B cell (primary cell): ENCODE measurements at regions of chr22 and their contacts with region 1.

Region 1: GRCh38 chr22:38051900-38052862 is 5.0 kb upstream of the PICK1 start:
- DNase-seq: peak; percentile 90
- ATAC-seq: peak; percentile 87
- H3K4me3 ChIP-seq: no peak overlapping the region
- H3K4me3 Mint-ChIP-seq: peak overlapping the region; percentile 26
- H3K27ac ChIP-seq: no peak overlapping the region
- H3K27ac Mint-ChIP-seq: no peak overlapping the region
- H3K4me1 ChIP-seq: peaks cover 6 to 20% of the 10 kb centered on the region in 2 donors
- H3K4me1 Mint-ChIP-seq: peaks cover 13% of the 10 kb centered on the region
- H3K27me3 ChIP-seq: peaks cover 0 to 14% (median 2%) of the 10 kb centered on the region in 4 experiments
- H3K27me3 Mint-ChIP-seq: peaks cover 4% of the 10 kb centered on the region
- CTCF ChIP-seq: peak; percentile 88

Region 2: DNA sequence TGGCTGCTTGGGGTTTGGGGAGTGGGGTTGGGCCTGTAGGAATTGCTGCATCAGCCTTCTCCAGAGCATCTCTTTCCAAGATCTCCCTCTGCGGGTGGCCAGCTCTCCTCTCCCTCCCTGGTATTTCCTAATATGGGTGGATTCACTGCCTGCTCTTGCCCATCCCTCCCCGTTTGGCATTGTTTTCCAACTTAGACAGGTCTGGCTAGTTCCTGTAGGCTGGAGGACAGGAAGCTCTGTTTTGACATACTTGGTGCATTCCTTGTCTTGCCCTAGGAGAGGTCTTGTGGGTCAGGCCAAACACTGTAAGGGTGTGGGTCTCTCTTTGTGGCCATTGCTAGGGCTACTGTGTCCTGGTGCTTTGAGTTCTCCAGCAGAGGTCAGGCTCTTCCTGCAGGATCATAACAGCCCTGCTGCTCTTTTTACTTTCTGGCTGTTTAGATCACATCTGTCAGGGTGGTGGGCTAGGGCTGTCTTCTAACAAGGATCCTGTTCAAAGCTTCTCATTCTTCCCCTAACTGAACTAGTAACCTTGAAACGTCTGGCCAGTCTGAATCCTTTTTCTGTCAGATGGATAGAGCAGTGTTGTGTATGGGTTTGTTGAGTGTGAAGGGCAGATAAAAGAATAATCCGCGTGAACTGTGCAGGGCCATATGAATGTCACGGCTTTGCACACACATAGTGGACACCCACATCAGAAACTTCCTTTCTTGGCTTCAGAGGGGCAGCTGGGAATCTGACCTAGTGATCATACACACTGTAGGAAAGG is 164.4 kb before region 1 on chr22:
- CTCF ChIA-PET with region 1: no interaction called
- POLR2A ChIA-PET with region 1: no interaction called
- intact Hi-C with region 1: no loop called
- DNase-seq: no peak
- ATAC-seq: no peak
- H3K4me3 ChIP-seq: no peak overlapping the region
- H3K4me3 Mint-ChIP-seq: no peak overlapping the region
- H3K27ac ChIP-seq: no peak overlapping the region
- H3K27ac Mint-ChIP-seq: no peak overlapping the region
- H3K4me1 ChIP-seq: no peaks in the 10 kb centered on the region
- H3K4me1 Mint-ChIP-seq: peaks cover 4% of the 10 kb centered on the region
- H3K27me3 ChIP-seq: no peaks in the 10 kb centered on the region
- H3K27me3 Mint-ChIP-seq: no peaks in the 10 kb centered on the region
- CTCF ChIP-seq: peak; percentile 11

Region 3: DNA sequence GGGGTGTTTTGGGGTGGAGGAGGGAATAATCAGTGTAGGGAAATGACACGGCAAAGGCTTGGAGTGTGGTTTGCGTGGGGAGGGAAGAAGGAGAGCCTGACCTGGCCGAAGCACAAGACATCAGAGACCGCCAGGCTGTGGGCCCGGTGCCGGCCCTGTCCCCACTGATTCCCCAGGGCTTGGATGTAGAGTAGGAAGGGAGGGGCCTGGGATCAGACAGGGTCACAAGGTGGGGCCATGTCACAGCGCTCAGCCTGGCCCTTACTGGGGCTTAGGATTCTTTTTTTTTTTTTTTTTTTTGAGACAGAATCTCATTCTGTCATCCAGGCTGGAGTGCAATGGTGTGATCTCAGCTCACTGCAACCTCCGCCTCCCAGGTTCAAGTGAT is 14.8 kb after region 1 on chr22:
- CTCF ChIA-PET with region 1: interaction called, 10 read pairs
- POLR2A ChIA-PET with region 1: interaction called, 4 read pairs
- intact Hi-C with region 1: no loop called
- DNase-seq: no peak
- ATAC-seq: no peak
- H3K4me3 ChIP-seq: no peak overlapping the region
- H3K4me3 Mint-ChIP-seq: no peak overlapping the region
- H3K27ac ChIP-seq: no peak overlapping the region
- H3K27ac Mint-ChIP-seq: no peak overlapping the region
- H3K4me1 ChIP-seq: peaks cover 0 to 4% of the 10 kb centered on the region in 2 donors
- H3K4me1 Mint-ChIP-seq: peaks cover 4% of the 10 kb centered on the region
- H3K27me3 ChIP-seq: no peaks in the 10 kb centered on the region
- H3K27me3 Mint-ChIP-seq: no peaks in the 10 kb centered on the region
- CTCF ChIP-seq: no peak

Region 4: GRCh38 chr22:38088629-38089473 is 36.7 kb after region 1 on chr22:
- CTCF ChIA-PET with region 1: no interaction called
- POLR2A ChIA-PET with region 1: no interaction called
- intact Hi-C with region 1: no loop called
- DNase-seq: no peak
- ATAC-seq: no peak
- H3K4me3 ChIP-seq: no peak overlapping the region
- H3K4me3 Mint-ChIP-seq: no peak overlapping the region
- H3K27ac ChIP-seq: no peak overlapping the region
- H3K27ac Mint-ChIP-seq: no peak overlapping the region
- H3K4me1 ChIP-seq: no peaks in the 10 kb centered on the region
- H3K4me1 Mint-ChIP-seq: no peaks in the 10 kb centered on the region
- H3K27me3 ChIP-seq: peaks cover 0 to 16% (median 4%) of the 10 kb centered on the region in 4 experiments
- H3K27me3 Mint-ChIP-seq: peaks cover 20% of the 10 kb centered on the region
- CTCF ChIP-seq: no peak

Region 5: GRCh38 chr22:38153821-38154562 is 101.8 kb after region 1 on chr22:
- CTCF ChIA-PET with region 1: no interaction called
- POLR2A ChIA-PET with region 1: no interaction called
- intact Hi-C with region 1: no loop called
- DNase-seq: no peak
- ATAC-seq: no peak
- H3K4me3 ChIP-seq: no peak overlapping the region
- H3K4me3 Mint-ChIP-seq: no peak overlapping the region
- H3K27ac ChIP-seq: no peak overlapping the region
- H3K27ac Mint-ChIP-seq: no peak overlapping the region
- H3K4me1 ChIP-seq: peaks cover 4 to 11% of the 10 kb centered on the region in 2 donors
- H3K4me1 Mint-ChIP-seq: peaks cover 10% of the 10 kb centered on the region
- H3K27me3 ChIP-seq: no peaks in the 10 kb centered on the region
- H3K27me3 Mint-ChIP-seq: no peaks in the 10 kb centered on the region
- CTCF ChIP-seq: no peak

Region 6: GRCh38 chr22:38230108-38230825 is 178.1 kb after region 1 on chr22:
- CTCF ChIA-PET with region 1: interaction called, 30 read pairs
- POLR2A ChIA-PET with region 1: no interaction called
- intact Hi-C with region 1: no loop called
- DNase-seq: peak; percentile 48
- ATAC-seq: no peak
- H3K4me3 ChIP-seq: no peak overlapping the region
- H3K4me3 Mint-ChIP-seq: no peak overlapping the region
- H3K27ac ChIP-seq: no peak overlapping the region
- H3K27ac Mint-ChIP-seq: no peak overlapping the region
- H3K4me1 ChIP-seq: no peaks in the 10 kb centered on the region
- H3K4me1 Mint-ChIP-seq: no peaks in the 10 kb centered on the region
- H3K27me3 ChIP-seq: no peaks in the 10 kb centered on the region
- H3K27me3 Mint-ChIP-seq: no peaks in the 10 kb centered on the region
- CTCF ChIP-seq: peak; percentile 35

Region 7: DNA sequence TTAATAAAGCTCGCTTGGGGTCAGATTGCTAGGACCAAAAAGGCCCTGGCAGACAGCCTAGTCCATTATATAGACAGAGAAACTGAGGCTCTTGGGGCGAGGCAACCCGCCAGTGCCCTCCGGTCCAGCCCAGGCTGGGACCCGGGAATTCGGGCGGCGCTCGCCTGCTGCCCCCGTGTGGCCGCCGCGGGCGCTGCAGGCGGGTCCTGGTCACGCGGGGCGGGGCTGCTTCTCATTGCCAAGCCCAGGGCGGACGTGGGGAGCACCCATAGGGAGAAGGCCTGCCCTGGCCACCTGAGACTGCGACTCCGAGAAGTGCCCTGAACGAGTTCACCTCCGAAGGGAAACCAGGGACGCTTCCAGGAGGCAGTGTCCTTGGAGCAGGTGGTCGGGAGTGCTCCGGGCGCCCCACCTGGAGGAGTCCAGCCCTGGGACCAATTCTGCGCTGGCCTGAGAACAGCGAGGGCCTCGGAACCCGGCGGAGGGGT is 301.0 kb after region 1 on chr22:
- CTCF ChIA-PET with region 1: interaction called, 32 read pairs
- POLR2A ChIA-PET with region 1: no interaction called
- intact Hi-C with region 1: loop called (anchors 1 kb)
- DNase-seq: peak; percentile 78
- ATAC-seq: peak; percentile 91
- H3K4me3 ChIP-seq: no peak overlapping the region
- H3K4me3 Mint-ChIP-seq: no peak overlapping the region
- H3K27ac ChIP-seq: peak overlapping the region in 1 of 2 donors; percentile 5
- H3K27ac Mint-ChIP-seq: no peak overlapping the region
- H3K4me1 ChIP-seq: peaks cover 0 to 6% of the 10 kb centered on the region in 2 donors
- H3K4me1 Mint-ChIP-seq: peaks cover 12% of the 10 kb centered on the region
- H3K27me3 ChIP-seq: no peaks in the 10 kb centered on the region
- H3K27me3 Mint-ChIP-seq: no peaks in the 10 kb centered on the region
- CTCF ChIP-seq: peak; percentile 97

Region 8: DNA sequence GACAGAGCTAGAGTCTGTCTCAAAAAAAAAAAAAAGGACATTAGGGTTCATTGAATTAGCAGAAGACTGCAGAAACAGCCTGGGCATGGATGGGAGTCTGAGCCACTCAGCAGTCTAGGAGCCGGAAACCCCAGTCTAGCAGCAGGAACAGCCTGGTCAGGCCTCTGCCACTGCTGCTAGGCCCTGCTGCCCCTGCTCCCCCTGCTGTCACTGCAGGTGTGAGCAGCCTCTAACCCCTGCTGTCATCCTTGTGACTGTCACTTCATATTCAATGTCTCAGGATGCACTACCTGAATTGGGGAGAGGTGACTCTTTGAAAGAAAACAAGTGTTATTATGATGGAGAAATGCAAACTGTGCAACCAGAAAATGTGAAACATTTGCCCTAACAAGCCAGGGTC is 460.9 kb after region 1 on chr22:
- CTCF ChIA-PET with region 1: interaction called, 12 read pairs
- POLR2A ChIA-PET with region 1: no interaction called
- intact Hi-C with region 1: no loop called
- DNase-seq: peak; percentile 42
- ATAC-seq: peak; percentile 73
- H3K4me3 ChIP-seq: no peak overlapping the region
- H3K4me3 Mint-ChIP-seq: no peak overlapping the region
- H3K27ac ChIP-seq: no peak overlapping the region
- H3K27ac Mint-ChIP-seq: no peak overlapping the region
- H3K4me1 ChIP-seq: no peaks in the 10 kb centered on the region
- H3K4me1 Mint-ChIP-seq: peaks cover 7% of the 10 kb centered on the region
- H3K27me3 ChIP-seq: no peaks in the 10 kb centered on the region
- H3K27me3 Mint-ChIP-seq: no peaks in the 10 kb centered on the region
- CTCF ChIP-seq: no peak

Region 9: DNA sequence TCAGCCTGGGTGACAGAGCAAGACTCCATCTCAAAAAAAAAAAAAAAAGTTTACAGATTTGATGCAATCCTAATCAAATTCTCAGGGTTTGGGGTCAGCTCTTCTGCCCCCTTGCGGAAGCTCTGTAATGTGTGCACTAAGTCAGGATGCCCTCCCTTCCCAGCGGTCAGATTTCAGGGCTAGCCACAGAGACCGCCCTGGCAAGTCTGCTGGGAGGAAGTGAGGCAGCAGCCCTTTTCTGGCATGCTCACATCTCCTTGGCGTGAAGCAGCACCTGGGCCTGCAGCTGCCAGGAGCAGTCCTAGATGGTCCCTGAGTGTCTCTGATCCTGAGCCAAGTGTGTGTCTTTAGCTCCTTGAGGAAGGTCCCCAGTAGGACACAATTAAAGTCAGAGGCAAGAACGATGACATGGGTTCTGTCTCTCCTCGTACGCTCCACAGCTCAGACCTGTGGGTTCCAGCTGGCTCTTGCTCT is 951.0 kb after region 1 on chr22:
- CTCF ChIA-PET with region 1: interaction called, 14 read pairs
- POLR2A ChIA-PET with region 1: no interaction called
- intact Hi-C with region 1: no loop called
- DNase-seq: peak; percentile 84
- ATAC-seq: peak; percentile 93
- H3K4me3 ChIP-seq: no peak overlapping the region
- H3K4me3 Mint-ChIP-seq: no peak overlapping the region
- H3K27ac ChIP-seq: no peak overlapping the region
- H3K27ac Mint-ChIP-seq: peak overlapping the region; percentile 27
- H3K4me1 ChIP-seq: peaks cover 7 to 12% of the 10 kb centered on the region in 2 donors
- H3K4me1 Mint-ChIP-seq: peaks cover 13% of the 10 kb centered on the region
- H3K27me3 ChIP-seq: no peaks in the 10 kb centered on the region
- H3K27me3 Mint-ChIP-seq: peaks cover 2% of the 10 kb centered on the region
- CTCF ChIP-seq: peak; percentile 80